ENCODE measurements at regions of chr2 and their contacts with region 1.

Region 1: GRCh38 chr2:64653349-64654062 is at the start of gene SERTAD2:
- DNase-seq: peak; percentile 75
- ATAC-seq: peak; percentile 76
- H3K4me3 ChIP-seq: peak within 1 kb of the TSS; percentile 92 to 97 (median 94)
- H3K27ac ChIP-seq: peak within 1 kb of the TSS; percentile 96
- H3K4me1 ChIP-seq: peaks cover 71% of the 10 kb centered on the region
- H3K27me3 ChIP-seq: no peaks in the 10 kb centered on the region; a peak in 1 of 5 replicates
- CTCF ChIP-seq: peak; percentile 58
- EP300 ChIP-seq: no peak
- POLR2A ChIP-seq: peak; percentile 56 to 86; a peak in 3 of 4 replicates
- RAD21 ChIP-seq: peak; percentile 39
- total RNA-seq, gene SERTAD2: 6.7 and 11.8 TPM in 2 replicates

Region 2: DNA sequence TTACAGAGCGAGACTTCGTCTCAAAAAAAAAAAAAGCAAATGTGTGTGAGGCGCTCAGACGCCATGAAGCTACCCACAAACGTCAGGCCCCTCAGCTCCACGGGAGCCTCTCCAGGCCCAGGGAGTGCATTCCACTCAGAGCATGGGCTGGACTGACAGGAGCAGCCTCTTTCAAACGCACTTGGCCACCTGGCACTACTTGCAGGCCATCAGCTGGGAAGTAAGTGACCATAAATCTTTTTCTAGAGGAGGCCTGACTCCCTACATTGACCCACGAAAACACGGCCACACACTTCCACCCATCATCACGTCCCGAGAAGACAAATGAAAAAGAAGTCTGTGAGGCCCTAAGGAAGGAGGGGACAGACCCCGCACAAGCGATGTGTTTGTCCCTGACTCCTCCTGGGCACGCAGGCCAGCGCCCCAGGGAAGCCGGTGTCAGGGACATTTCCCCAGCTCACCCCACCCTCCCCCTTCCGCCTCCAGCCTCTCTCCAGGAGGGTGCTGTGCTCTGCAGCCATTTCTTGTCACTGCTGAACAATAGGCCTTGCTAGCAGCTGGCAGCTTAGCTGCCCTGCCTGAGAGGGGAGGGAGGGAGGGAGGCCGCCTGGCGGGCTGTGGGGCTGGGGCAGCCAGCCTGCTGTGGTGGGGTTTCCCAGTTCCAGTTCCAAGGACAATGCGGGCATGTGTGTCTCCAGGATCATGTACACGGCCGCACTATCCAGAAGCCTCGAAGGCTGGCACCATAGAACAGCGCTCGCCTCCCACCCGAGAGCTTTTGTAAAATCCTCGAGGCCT is 26.3 kb before region 1 on chr2:
- CTCF ChIA-PET with region 1: no interaction called
- POLR2A ChIA-PET with region 1: interaction called, 15 read pairs
- in situ Hi-C with region 1: no loop called
- intact Hi-C with region 1: no loop called
- DNase-seq: no peak
- ATAC-seq: peak; percentile 18
- H3K4me3 ChIP-seq: no peak overlapping the region
- H3K27ac ChIP-seq: no peak overlapping the region
- H3K4me1 ChIP-seq: peaks cover 28% of the 10 kb centered on the region
- H3K27me3 ChIP-seq: peaks cover 1 to 5% of the 10 kb centered on the region in 2 experiments; a peak in 2 of 5 replicates
- CTCF ChIP-seq: no peak
- EP300 ChIP-seq: no peak
- POLR2A ChIP-seq: no peak
- RAD21 ChIP-seq: no peak

Region 3: DNA sequence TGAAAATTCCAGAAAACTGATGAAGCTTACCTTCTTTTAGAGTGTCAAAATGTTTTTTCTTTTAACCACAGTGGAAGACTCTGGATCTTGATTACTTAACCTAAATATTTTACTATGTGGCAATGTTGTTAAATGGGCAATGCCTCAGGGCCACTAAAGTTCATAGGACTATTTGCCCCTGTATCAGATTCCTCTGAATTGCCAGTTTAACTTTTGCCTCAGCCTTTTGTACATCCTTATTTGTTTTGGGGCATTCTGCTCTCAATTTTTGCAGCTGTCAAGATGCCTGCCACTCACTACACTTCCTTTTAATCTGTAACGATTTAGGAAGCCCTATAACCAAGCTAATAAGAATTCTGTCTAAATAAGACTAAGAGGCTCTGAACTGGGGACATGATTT is 31.9 kb after region 1 on chr2:
- CTCF ChIA-PET with region 1: no interaction called
- POLR2A ChIA-PET with region 1: interaction called, 50 read pairs
- in situ Hi-C with region 1: no loop called
- intact Hi-C with region 1: loop called (anchors 5 kb)
- DNase-seq: peak; percentile 88
- ATAC-seq: peak; percentile 93
- H3K4me3 ChIP-seq: no peak overlapping the region; a peak in 1 of 6 replicates
- H3K27ac ChIP-seq: peak overlapping the region; percentile 28
- H3K4me1 ChIP-seq: peaks cover 48% of the 10 kb centered on the region
- H3K27me3 ChIP-seq: no peaks in the 10 kb centered on the region
- CTCF ChIP-seq: no peak
- EP300 ChIP-seq: peak in 1 of 2 experiments; percentile 88; a peak in 2 of 4 replicates
- POLR2A ChIP-seq: no peak
- RAD21 ChIP-seq: no peak

Region 4: GRCh38 chr2:64750817-64751285 is 97.3 kb after region 1 on chr2:
- CTCF ChIA-PET with region 1: no interaction called
- POLR2A ChIA-PET with region 1: interaction called, 282 read pairs
- in situ Hi-C with region 1: loop called (anchors 5 kb)
- intact Hi-C with region 1: loop called (anchors 2 kb)
- DNase-seq: peak; percentile 99
- ATAC-seq: peak; percentile 92
- H3K4me3 ChIP-seq: peak overlapping the region; percentile 80 to 93 (median 89)
- H3K27ac ChIP-seq: peak overlapping the region; percentile 80
- H3K4me1 ChIP-seq: peaks cover 42% of the 10 kb centered on the region
- H3K27me3 ChIP-seq: no peaks in the 10 kb centered on the region; a peak in 1 of 5 replicates
- CTCF ChIP-seq: no peak; the same call in 1 of the 2 replicates
- EP300 ChIP-seq: peak in 1 of 2 experiments; percentile 9; a peak in 2 of 4 replicates
- POLR2A ChIP-seq: peak; percentile 73 to 92
- RAD21 ChIP-seq: peak; percentile 59; the same call in 1 of the 2 replicates

Region 5: GRCh38 chr2:64859312-64860212 is 206.1 kb after region 1 on chr2:
- CTCF ChIA-PET with region 1: no interaction called
- POLR2A ChIA-PET with region 1: interaction called, 19 read pairs
- in situ Hi-C with region 1: loop called (anchors 5 kb)
- intact Hi-C with region 1: no loop called
- DNase-seq: no peak
- ATAC-seq: peak; percentile 76
- H3K4me3 ChIP-seq: peak overlapping the region; percentile 46 to 76 (median 57)
- H3K27ac ChIP-seq: no peak overlapping the region
- H3K4me1 ChIP-seq: peaks cover 52% of the 10 kb centered on the region
- H3K27me3 ChIP-seq: peaks cover 5 to 55% of the 10 kb centered on the region in 2 experiments
- CTCF ChIP-seq: no peak; the same call in 1 of the 2 replicates
- EP300 ChIP-seq: peak in 1 of 2 experiments; percentile 27; a peak in 1 of 4 replicates
- POLR2A ChIP-seq: no peak
- RAD21 ChIP-seq: no peak

Region 6: DNA sequence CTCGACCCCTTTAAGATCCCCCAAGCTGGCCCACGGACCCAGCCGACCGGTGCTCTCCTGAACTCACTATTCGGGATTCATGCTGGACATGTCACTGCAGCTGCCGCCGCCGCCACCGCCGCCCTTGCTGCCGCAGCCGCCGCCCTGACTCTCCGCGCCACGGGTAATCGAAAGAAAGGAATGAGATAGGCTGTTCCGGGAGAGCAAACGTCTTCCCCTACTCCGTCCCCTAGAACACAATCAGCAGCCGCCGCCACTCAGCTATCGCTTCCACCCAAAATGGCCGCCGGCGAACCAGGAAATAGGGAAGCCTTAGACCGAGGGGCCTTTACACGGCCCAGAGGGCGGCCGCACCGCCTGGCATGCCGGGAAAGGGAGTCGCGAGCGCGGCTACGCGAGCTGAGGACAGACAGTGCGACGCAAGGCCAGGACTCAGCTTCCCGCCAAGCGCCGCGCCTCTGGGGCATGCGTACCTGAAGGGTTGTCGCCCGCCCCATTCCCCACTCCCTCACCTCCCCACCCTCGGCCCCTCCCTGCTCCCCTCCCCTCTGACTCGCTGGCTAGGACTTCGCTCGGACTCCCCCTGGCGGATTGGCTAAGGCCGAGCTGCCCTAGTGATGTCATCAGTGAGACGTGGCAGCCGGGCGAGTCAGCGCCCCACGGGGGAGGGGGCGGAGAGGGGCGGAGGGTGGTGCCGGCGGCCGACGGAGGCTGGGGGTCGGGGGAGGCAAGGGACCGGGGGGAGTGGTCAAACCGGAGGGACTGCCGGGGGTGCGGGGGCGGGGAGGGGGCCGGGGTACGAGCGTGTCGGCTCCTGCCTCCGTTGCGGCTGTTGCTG is 476.5 kb after region 1 on chr2 and contains the start of gene RAB1A:
- CTCF ChIA-PET with region 1: no interaction called
- POLR2A ChIA-PET with region 1: interaction called, 10 read pairs
- in situ Hi-C with region 1: no loop called
- intact Hi-C with region 1: no loop called
- DNase-seq: peak; percentile 99
- ATAC-seq: peak; percentile 98
- H3K4me3 ChIP-seq: peak within 1 kb of the TSS; percentile 89 to 98 (median 97)
- H3K27ac ChIP-seq: peak within 1 kb of the TSS; percentile 95
- H3K4me1 ChIP-seq: peaks cover 69% of the 10 kb centered on the region
- H3K27me3 ChIP-seq: peaks cover 0 to 4% of the 10 kb centered on the region in 2 experiments; a peak in 1 of 5 replicates
- CTCF ChIP-seq: peak; percentile 80
- EP300 ChIP-seq: no peak
- POLR2A ChIP-seq: peak; percentile 88 to 93
- RAD21 ChIP-seq: no peak
- total RNA-seq, gene RAB1A: 206 and 311 TPM in 2 replicates

Measured in HepG2 (cell line).